Activated CD4-positive, alpha-beta memory T cell treated with anti-CD3 and anti-CD28 coated beads for 36 hours (primary cell): ENCODE measurements at regions of chr12 and their contacts with region 1.

Region 1: GRCh38 chr12:94207849-94208621 is 59.7 kb downstream of the PLXNC1 start:
- DNase-seq: peak; percentile 70
- H3K4me3 Mint-ChIP-seq: peak overlapping the region; percentile 71
- H3K27ac Mint-ChIP-seq: peak overlapping the region; percentile 97
- H3K4me1 Mint-ChIP-seq: peaks cover 60% of the 10 kb centered on the region
- H3K27me3 Mint-ChIP-seq: no peaks in the 10 kb centered on the region

Region 2: GRCh38 chr12:92928962-92929915 is 1278.8 kb before region 1 on chr12 and contains the start of gene EEA1:
- CTCF ChIA-PET with region 1: no interaction called
- POLR2A ChIA-PET with region 1: no interaction called
- intact Hi-C with region 1: loop called (anchors 2 kb)
- DNase-seq: peak; percentile 98
- H3K4me3 Mint-ChIP-seq: peak within 1 kb of the TSS; percentile 85
- H3K27ac Mint-ChIP-seq: peak within 1 kb of the TSS; percentile 95
- H3K4me1 Mint-ChIP-seq: peaks cover 32% of the 10 kb centered on the region
- H3K27me3 Mint-ChIP-seq: no peaks in the 10 kb centered on the region
- total RNA-seq, gene EEA1: 17.5 to 17.7 TPM

Region 3: GRCh38 chr12:94172973-94173372 is 35.1 kb before region 1 on chr12:
- CTCF ChIA-PET with region 1: interaction called, 8 read pairs
- POLR2A ChIA-PET with region 1: interaction called, 4 read pairs
- intact Hi-C with region 1: loop called (anchors 1 kb)
- DNase-seq: no peak
- H3K4me3 Mint-ChIP-seq: no peak overlapping the region
- H3K27ac Mint-ChIP-seq: no peak overlapping the region
- H3K4me1 Mint-ChIP-seq: peaks cover 60% of the 10 kb centered on the region
- H3K27me3 Mint-ChIP-seq: no peaks in the 10 kb centered on the region

Region 4: GRCh38 chr12:94262228-94263010 is 54.4 kb after region 1 on chr12:
- CTCF ChIA-PET with region 1: interaction called, 3 read pairs
- POLR2A ChIA-PET with region 1: interaction called, 10 read pairs
- intact Hi-C with region 1: loop called (anchors 1 kb)
- DNase-seq: peak; percentile 85
- H3K4me3 Mint-ChIP-seq: peak overlapping the region; percentile 88
- H3K27ac Mint-ChIP-seq: peak overlapping the region; percentile 98
- H3K4me1 Mint-ChIP-seq: peaks cover 37% of the 10 kb centered on the region
- H3K27me3 Mint-ChIP-seq: no peaks in the 10 kb centered on the region

Region 5: DNA sequence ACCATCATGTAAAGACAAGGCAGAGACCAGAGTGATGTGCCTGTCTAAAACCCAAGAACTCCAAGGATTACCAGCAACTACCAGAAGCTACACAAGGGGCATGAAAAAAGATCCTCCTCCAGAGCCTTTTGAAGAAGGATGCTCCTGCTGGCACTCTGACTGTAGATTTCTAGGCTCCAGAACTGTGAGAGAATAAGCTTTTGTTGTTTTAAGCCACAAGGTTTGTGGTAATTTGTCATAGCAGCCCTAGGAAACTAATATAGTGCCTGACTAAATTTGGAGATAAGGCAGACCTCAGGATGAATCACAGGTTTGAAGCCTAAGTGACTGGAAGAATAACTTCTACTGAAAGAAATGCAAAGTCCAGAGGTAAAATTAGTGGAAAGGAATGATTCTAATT is 118.7 kb after region 1 on chr12:
- CTCF ChIA-PET with region 1: no interaction called
- POLR2A ChIA-PET with region 1: interaction called, 8 read pairs
- intact Hi-C with region 1: loop called (anchors 2 kb)
- DNase-seq: peak; percentile 20
- H3K4me3 Mint-ChIP-seq: no peak overlapping the region
- H3K27ac Mint-ChIP-seq: peak overlapping the region; percentile 8
- H3K4me1 Mint-ChIP-seq: peaks cover 24% of the 10 kb centered on the region
- H3K27me3 Mint-ChIP-seq: no peaks in the 10 kb centered on the region

Region 6: GRCh38 chr12:94459728-94460615 is 251.9 kb after region 1 on chr12 and contains the start of gene CEP83:
- CTCF ChIA-PET with region 1: interaction called, 4 read pairs
- POLR2A ChIA-PET with region 1: interaction called, 4 read pairs
- intact Hi-C with region 1: loop called (anchors 1 kb)
- DNase-seq: peak; percentile 98
- H3K4me3 Mint-ChIP-seq: peak within 1 kb of the TSS; percentile 82
- H3K27ac Mint-ChIP-seq: peak within 1 kb of the TSS; percentile 92
- H3K4me1 Mint-ChIP-seq: peaks cover 31% of the 10 kb centered on the region
- H3K27me3 Mint-ChIP-seq: peaks cover 7% of the 10 kb centered on the region
- total RNA-seq, gene CEP83: 23.4 TPM